GM12878 (cell line): ENCODE measurements at regions of chr19 and their contacts with region 1.

Region 1: DNA sequence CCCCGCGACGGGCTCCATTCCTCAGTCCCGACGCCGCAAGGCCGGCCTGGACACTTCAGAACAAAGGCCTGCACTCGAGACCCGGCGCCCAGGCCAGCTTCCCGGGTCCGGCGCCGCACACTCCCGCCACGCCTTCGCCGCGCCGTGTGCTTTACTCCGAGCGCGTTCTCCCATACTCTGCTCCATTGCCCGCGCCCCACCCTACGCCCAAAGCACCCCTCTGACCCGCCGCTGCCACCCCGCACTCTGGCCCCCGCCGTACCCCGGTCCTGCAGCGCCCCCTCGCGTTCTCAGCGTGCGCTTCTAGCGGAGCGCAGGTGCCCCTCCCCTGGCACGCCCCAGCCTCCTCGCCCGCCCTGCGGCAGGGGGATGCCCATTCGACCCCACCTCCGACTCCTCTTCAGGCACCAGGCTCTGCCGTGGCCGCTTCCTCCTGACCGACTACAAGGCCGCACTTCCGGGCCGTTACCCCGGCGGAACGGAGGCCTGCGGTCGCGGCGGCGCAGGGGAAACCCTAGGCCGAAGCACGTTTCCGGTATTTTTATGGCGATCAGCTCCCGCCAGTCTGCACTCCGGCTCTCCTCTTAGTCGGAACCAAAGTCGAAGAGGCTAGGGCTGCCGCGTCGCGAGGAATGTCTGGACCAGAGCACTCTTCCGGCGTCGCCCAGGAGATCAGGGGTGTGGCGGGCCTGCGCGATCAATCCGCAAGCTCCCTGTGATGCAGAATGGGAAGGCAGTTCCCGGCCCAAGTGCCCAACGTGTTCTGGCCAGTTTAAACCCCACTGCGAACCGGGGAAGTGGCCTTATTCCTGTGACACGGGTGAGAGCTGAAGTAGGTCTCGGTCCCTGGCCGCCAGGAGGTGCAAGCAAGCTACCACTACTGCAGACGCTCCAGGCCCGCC is at the start of gene ZBTB45:
- DNase-seq: peak; percentile 92
- ATAC-seq: peak; percentile 86
- H3K4me3 ChIP-seq: peak within 1 kb of the TSS; percentile 89
- H3K27ac ChIP-seq: peak within 1 kb of the TSS; percentile 88
- H3K4me1 ChIP-seq: peaks cover 22% of the 10 kb centered on the region
- H3K27me3 ChIP-seq: no peaks in the 10 kb centered on the region
- CTCF ChIP-seq: peak; percentile 79 to 91 (median 88)
- EP300 ChIP-seq: peak in 1 of 2 experiments; percentile 20; a peak in 1 of 4 replicates
- POLR2A ChIP-seq: peak; percentile 89
- RAD21 ChIP-seq: peak; percentile 80
- polyA plus RNA-seq, gene ZBTB45: 0.29 to 0.33 TPM

Region 2: GRCh38 chr19:58326914-58327726 is 192.5 kb before region 1 on chr19 and contains the start of gene ZSCAN22:
- CTCF ChIA-PET with region 1: interaction called, 7 read pairs
- POLR2A ChIA-PET with region 1: no interaction called
- RAD21 ChIA-PET with region 1: interaction called, 3 read pairs
- SMC1A ChIA-PET with region 1: interaction called, 3 read pairs
- in situ Hi-C with region 1: no loop called
- intact Hi-C with region 1: loop called (anchors 5 kb)
- DNase-seq: peak; percentile 68
- ATAC-seq: peak; percentile 95
- H3K4me3 ChIP-seq: peak within 1 kb of the TSS; percentile 74
- H3K27ac ChIP-seq: peak within 1 kb of the TSS; percentile 79
- H3K4me1 ChIP-seq: peaks cover 5% of the 10 kb centered on the region
- H3K27me3 ChIP-seq: no peaks in the 10 kb centered on the region
- CTCF ChIP-seq: no peak
- EP300 ChIP-seq: no peak
- POLR2A ChIP-seq: peak; percentile 88
- RAD21 ChIP-seq: no peak
- polyA plus RNA-seq, gene ZSCAN22: 0.49 to 1.7 TPM

Region 3: GRCh38 chr19:58338825-58339558 is 180.6 kb before region 1 on chr19:
- CTCF ChIA-PET with region 1: no interaction called
- POLR2A ChIA-PET with region 1: no interaction called
- RAD21 ChIA-PET with region 1: no interaction called
- SMC1A ChIA-PET with region 1: no interaction called
- in situ Hi-C with region 1: no loop called
- intact Hi-C with region 1: no loop called
- DNase-seq: no peak
- ATAC-seq: no peak
- H3K4me3 ChIP-seq: no peak overlapping the region
- H3K27ac ChIP-seq: no peak overlapping the region
- H3K4me1 ChIP-seq: no peaks in the 10 kb centered on the region
- H3K27me3 ChIP-seq: no peaks in the 10 kb centered on the region
- CTCF ChIP-seq: 0 out of 6 replicates have a peak, but pooled peaks of 1 of the 3 experiments have one; percentile 0
- EP300 ChIP-seq: no peak
- POLR2A ChIP-seq: no peak
- RAD21 ChIP-seq: no peak

Region 4: GRCh38 chr19:58355908-58356765 is 163.5 kb before region 1 on chr19:
- CTCF ChIA-PET with region 1: no interaction called
- POLR2A ChIA-PET with region 1: no interaction called
- RAD21 ChIA-PET with region 1: no interaction called
- SMC1A ChIA-PET with region 1: no interaction called
- in situ Hi-C with region 1: no loop called
- intact Hi-C with region 1: no loop called
- DNase-seq: no peak
- ATAC-seq: peak; percentile 24
- H3K4me3 ChIP-seq: no peak overlapping the region
- H3K27ac ChIP-seq: no peak overlapping the region
- H3K4me1 ChIP-seq: no peaks in the 10 kb centered on the region; the same call in none of the 2 replicates
- H3K27me3 ChIP-seq: no peaks in the 10 kb centered on the region
- CTCF ChIP-seq: no peak
- EP300 ChIP-seq: no peak
- POLR2A ChIP-seq: peak; percentile 12
- RAD21 ChIP-seq: no peak

Region 5: GRCh38 chr19:58456111-58456510 is 63.5 kb before region 1 on chr19:
- CTCF ChIA-PET with region 1: no interaction called
- POLR2A ChIA-PET with region 1: no interaction called
- RAD21 ChIA-PET with region 1: no interaction called
- SMC1A ChIA-PET with region 1: no interaction called
- in situ Hi-C with region 1: no loop called
- intact Hi-C with region 1: no loop called
- DNase-seq: no peak
- ATAC-seq: no peak
- H3K4me3 ChIP-seq: no peak overlapping the region
- H3K27ac ChIP-seq: no peak overlapping the region
- H3K4me1 ChIP-seq: peaks cover under 1% of the 10 kb centered on the region; the same call in 1 of the 2 replicates
- H3K27me3 ChIP-seq: no peaks in the 10 kb centered on the region
- CTCF ChIP-seq: no peak
- EP300 ChIP-seq: no peak
- POLR2A ChIP-seq: no peak
- RAD21 ChIP-seq: no peak

Region 6: GRCh38 chr19:58475714-58476497 is 43.7 kb before region 1 on chr19 and contains the start of gene ZNF446:
- CTCF ChIA-PET with region 1: no interaction called
- POLR2A ChIA-PET with region 1: no interaction called
- RAD21 ChIA-PET with region 1: no interaction called
- SMC1A ChIA-PET with region 1: no interaction called
- in situ Hi-C with region 1: no loop called
- intact Hi-C with region 1: loop called (anchors 1 kb)
- DNase-seq: peak; percentile 93
- ATAC-seq: peak; percentile 95
- H3K4me3 ChIP-seq: peak within 1 kb of the TSS; percentile 50
- H3K27ac ChIP-seq: peak within 1 kb of the TSS; percentile 81
- H3K4me1 ChIP-seq: peaks cover 21% of the 10 kb centered on the region
- H3K27me3 ChIP-seq: no peaks in the 10 kb centered on the region
- CTCF ChIP-seq: no peak
- EP300 ChIP-seq: no peak
- POLR2A ChIP-seq: peak; percentile 77
- RAD21 ChIP-seq: no peak
- polyA plus RNA-seq, gene ZNF446: 0.14 to 0.49 TPM

Region 7: DNA sequence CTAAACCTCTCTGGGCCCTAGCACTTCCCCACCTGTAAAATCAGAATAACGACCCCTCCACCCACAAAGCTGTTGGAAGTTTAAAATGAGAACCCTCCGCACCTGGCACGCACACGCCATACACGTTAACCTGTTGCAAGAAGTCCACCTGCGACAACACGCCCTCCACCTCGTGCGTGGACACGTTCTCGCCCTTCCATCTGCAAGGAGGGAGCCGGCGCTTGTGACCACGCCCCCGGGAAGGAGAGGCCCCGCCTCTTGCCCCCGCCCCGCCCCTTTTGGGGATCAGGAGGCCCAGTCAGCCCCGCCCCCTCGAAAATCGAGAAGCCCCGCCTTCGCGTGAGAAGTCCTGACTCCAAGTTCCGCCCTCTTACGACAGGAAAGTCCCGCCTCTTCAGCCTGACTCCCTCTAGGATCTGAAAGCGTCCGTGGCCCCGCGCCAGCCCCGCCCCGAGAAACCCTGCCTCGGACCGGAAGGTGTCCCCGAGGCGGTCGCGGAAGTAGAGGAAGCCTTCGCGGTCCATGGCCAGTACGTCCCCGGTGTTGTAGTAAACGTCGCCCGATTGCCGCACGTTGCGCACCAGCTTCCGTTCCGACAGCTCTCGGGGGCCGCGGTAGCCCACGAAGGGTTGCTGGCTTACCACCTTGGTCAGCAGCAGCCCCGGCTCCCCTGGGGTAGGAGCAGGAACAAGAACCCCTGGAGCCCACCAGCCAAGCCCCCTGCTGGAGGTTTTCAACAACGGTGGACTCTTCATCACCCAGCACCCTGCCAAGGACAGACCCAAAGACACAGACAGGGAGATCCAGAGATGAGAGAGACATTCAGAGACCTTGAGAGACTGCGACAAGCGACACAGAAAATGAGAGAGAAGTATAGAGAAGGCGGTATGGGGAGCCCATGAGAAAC is 20.3 kb before region 1 on chr19:
- CTCF ChIA-PET with region 1: interaction called, 24 read pairs
- POLR2A ChIA-PET with region 1: no interaction called
- RAD21 ChIA-PET with region 1: no interaction called
- SMC1A ChIA-PET with region 1: interaction called, 3 read pairs
- in situ Hi-C with region 1: no loop called
- intact Hi-C with region 1: no loop called
- DNase-seq: peak; percentile 89
- ATAC-seq: peak; percentile 99
- H3K4me3 ChIP-seq: peak overlapping the region; percentile 80
- H3K27ac ChIP-seq: peak overlapping the region; percentile 87
- H3K4me1 ChIP-seq: peaks cover 11% of the 10 kb centered on the region
- H3K27me3 ChIP-seq: no peaks in the 10 kb centered on the region
- CTCF ChIP-seq: peak in 1 of 3 experiments; percentile 34; a peak in 2 of 6 replicates
- EP300 ChIP-seq: no peak
- POLR2A ChIP-seq: peak; percentile 88
- RAD21 ChIP-seq: 0 out of 2 replicates have a peak, but pooled peaks have one; percentile 16

Region 8: GRCh38 chr19:58558623-58559274 is 39.1 kb after region 1 on chr19:
- CTCF ChIA-PET with region 1: interaction called, 37 read pairs
- POLR2A ChIA-PET with region 1: interaction called, 16 read pairs
- RAD21 ChIA-PET with region 1: interaction called, 13 read pairs
- SMC1A ChIA-PET with region 1: interaction called, 21 read pairs
- in situ Hi-C with region 1: no loop called
- intact Hi-C with region 1: loop called (anchors 2 kb)
- DNase-seq: peak; percentile 95
- ATAC-seq: peak; percentile 72
- H3K4me3 ChIP-seq: peak overlapping the region; percentile 89
- H3K27ac ChIP-seq: peak overlapping the region; percentile 96
- H3K4me1 ChIP-seq: peaks cover 50% of the 10 kb centered on the region
- H3K27me3 ChIP-seq: no peaks in the 10 kb centered on the region
- CTCF ChIP-seq: no peak
- EP300 ChIP-seq: no peak
- POLR2A ChIP-seq: peak; percentile 83
- RAD21 ChIP-seq: no peak

Region 9: DNA sequence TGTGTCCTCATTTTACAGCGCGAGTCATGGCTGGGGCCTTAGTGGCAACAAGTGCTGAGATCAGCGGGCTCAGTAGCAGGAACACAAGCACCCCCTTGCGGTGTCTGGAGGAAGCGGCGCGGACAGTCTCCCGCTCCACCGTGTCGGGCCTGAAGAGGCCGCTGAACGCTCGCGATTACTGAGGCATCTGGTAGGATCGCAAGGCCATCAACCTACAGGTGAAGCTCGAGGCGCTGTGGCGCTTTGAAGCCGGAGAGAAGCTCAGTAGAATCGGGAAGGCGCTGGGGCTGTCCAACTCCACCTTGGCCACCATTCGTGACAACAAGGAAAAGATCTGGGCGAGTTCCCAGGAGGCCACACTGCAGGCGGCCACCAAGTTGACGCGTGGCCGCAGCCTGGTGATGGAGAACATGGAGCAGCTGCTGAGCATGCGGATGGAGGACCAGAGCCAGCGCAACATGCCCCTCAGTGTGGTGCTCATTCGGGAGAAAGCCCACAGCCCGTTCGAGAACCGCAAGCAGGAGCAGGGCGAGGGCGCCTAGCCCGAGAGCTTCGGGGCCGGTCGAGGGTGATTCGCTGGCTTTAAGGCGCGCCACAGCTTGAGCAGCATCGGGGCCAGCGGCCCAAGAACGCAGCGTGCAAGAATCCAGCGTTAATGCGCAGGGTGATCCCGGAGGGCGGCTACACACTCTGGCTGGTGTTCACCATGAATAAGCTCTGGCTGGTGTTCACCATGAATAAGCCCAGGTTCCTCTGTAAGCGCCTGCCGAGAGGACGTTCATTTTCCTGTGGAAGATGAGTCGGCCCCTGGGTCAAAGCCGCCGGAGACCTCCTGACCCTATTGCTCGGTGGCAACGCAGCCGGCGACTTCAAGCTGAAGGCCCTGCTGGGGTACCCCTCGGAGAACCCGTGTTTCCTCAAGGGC is 61.9 kb after region 1 on chr19:
- CTCF ChIA-PET with region 1: interaction called, 67 read pairs
- POLR2A ChIA-PET with region 1: interaction called, 24 read pairs
- RAD21 ChIA-PET with region 1: interaction called, 50 read pairs
- SMC1A ChIA-PET with region 1: interaction called, 43 read pairs
- in situ Hi-C with region 1: no loop called
- intact Hi-C with region 1: no loop called
- DNase-seq: no peak
- ATAC-seq: peak; percentile 91
- H3K4me3 ChIP-seq: no peak overlapping the region
- H3K27ac ChIP-seq: no peak overlapping the region
- H3K4me1 ChIP-seq: peaks cover 20% of the 10 kb centered on the region
- H3K27me3 ChIP-seq: no peaks in the 10 kb centered on the region
- CTCF ChIP-seq: peak; percentile 70 to 99 (median 87)
- EP300 ChIP-seq: no peak
- POLR2A ChIP-seq: no peak
- RAD21 ChIP-seq: no peak